Sigmoid colon (tissue), 7 donors: ENCODE measurements at regions of chr3 and their contacts with region 1.

Region 1: GRCh38 chr3:102536456-102536855 is 101.6 kb downstream of the ZPLD1 start:
- DNase-seq: no peak
- H3K4me3 ChIP-seq: no peak overlapping the region
- H3K27ac ChIP-seq: no peak overlapping the region
- H3K4me1 ChIP-seq: no peaks in the 10 kb centered on the region
- H3K27me3 ChIP-seq: no peaks in the 10 kb centered on the region
- CTCF ChIP-seq: peak in 1 of 4 experiments; percentile 28
- EP300 ChIP-seq: no peak
- POLR2A ChIP-seq: no peak

Region 2: GRCh38 chr3:101695779-101696372 is 840.6 kb before region 1 on chr3:
- intact Hi-C with region 1: loop called (anchors 5 kb)
- DNase-seq: no peak
- H3K4me3 ChIP-seq: no peak overlapping the region
- H3K27ac ChIP-seq: no peak overlapping the region
- H3K4me1 ChIP-seq: no peaks in the 10 kb centered on the region
- H3K27me3 ChIP-seq: no peaks in the 10 kb centered on the region
- CTCF ChIP-seq: peak; percentile 51 to 80 (median 62)
- EP300 ChIP-seq: no peak
- POLR2A ChIP-seq: no peak

Region 3: DNA sequence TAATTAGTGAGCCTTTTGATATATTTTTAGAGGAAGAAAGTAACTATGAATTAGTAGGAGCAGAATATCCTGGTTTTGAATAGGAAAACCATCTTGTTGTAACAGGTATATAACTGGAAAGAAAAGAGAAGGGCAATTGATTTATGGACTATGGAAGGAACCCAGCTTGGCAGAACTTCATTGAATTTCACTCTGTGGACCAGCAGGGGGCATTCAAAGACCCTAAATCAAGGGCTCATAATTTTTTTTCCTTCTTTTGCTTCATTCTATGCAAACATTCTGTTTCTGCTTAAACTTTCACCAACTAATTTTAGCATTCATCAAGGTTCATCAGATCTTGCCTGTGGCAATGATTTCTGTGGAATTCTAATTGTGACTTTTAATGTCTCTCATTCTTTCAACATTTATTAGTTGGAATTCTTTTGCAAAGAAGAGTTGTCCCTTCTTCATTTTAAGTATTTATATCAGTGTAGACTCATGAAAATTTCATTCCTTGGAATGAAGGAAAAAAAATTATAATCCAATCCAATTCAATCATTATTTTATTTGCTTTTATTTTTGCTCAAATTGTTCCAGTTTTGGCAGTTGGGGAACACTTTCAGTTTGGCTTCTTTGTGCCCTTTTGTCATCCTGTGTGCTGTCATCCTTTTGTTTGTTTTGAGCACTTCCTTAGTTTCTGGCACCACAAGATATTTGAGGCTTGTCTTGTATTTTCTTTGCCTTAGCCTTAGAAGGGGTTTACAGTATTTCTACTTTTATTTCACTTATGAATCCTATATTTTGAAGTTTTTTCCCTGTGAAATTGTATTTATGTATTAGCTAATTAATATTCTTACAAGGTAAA is 727.1 kb before region 1 on chr3:
- intact Hi-C with region 1: loop called (anchors 5 kb)
- DNase-seq: no peak
- H3K4me3 ChIP-seq: no peak overlapping the region
- H3K27ac ChIP-seq: peak overlapping the region; percentile 7 to 52 (median 36)
- H3K4me1 ChIP-seq: peaks cover 0 to 37% (median 16%) of the 10 kb centered on the region in 4 donors
- H3K27me3 ChIP-seq: no peaks in the 10 kb centered on the region
- CTCF ChIP-seq: peak; percentile 45 to 61 (median 56)
- EP300 ChIP-seq: no peak
- POLR2A ChIP-seq: no peak